ENCODE measurements at regions of chr10 and their contacts with region 1.

Region 1: GRCh38 chr10:68955832-68956532 is at the start of gene DDX21:
- DNase-seq: peak; percentile 73 to 95 (median 82)
- ATAC-seq: peak; percentile 80
- H3K4me3 ChIP-seq: peak within 1 kb of the TSS; percentile 97
- H3K4me3 Mint-ChIP-seq: peak within 1 kb of the TSS; percentile 95
- H3K27ac ChIP-seq: peak within 1 kb of the TSS; percentile 98 to 100
- H3K27ac Mint-ChIP-seq: peak within 1 kb of the TSS; percentile 94
- H3K4me1 ChIP-seq: peaks cover 45% of the 10 kb centered on the region
- H3K4me1 Mint-ChIP-seq: peaks cover 44% of the 10 kb centered on the region
- H3K27me3 ChIP-seq: no peaks in the 10 kb centered on the region
- H3K27me3 Mint-ChIP-seq: no peaks in the 10 kb centered on the region
- CTCF ChIP-seq: peak; percentile 87
- total RNA-seq, gene DDX21: 120 to 121 TPM

Region 2: DNA sequence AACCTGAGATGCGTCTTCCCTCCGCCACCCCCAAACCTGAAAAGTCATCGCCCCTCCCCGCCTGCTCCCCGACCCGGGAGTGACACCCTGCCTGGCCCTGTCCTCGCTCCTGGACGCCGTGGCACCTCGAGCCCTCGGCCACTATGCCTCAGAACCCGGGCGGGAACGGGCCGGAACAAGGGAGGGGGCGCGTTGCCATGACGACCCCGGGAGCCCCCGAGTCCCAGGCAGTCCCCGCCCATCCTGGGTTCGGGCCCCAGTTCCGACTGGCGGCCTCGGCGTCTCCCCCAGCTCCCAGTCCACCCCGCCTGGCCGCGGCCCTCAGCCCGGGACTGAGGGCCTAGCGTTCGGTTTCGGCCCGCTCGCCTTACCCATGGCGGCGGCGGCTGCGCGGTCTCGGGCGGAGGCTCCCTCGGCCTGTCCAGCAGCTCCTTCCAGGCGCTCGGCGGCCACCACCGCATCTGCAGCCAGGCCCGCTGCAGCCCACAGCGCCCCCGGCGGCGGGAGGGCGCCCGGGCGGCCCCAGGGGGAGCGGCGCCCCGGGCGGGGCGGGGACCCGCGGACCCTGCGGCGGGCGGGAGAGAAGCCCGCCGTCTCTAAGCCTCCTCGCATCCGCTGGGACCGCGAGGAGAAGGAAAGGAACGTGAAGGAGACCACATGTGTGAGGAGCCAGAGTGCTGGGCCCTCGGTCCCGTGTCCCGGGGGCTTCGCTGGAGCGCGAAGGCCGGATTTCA is 549.0 kb before region 1 on chr10 and contains the start of gene RUFY2:
- CTCF ChIA-PET with region 1: no interaction called
- POLR2A ChIA-PET with region 1: no interaction called
- intact Hi-C with region 1: loop called in 1 of 2 experiments (anchors 10 kb)
- DNase-seq: peak; percentile 42 to 88 (median 70)
- ATAC-seq: peak; percentile 94
- H3K4me3 ChIP-seq: peak within 1 kb of the TSS; percentile 99
- H3K4me3 Mint-ChIP-seq: peak within 1 kb of the TSS; percentile 89
- H3K27ac ChIP-seq: peak within 1 kb of the TSS in 1 of 2 donors; percentile 35
- H3K27ac Mint-ChIP-seq: peak within 1 kb of the TSS; percentile 53
- H3K4me1 ChIP-seq: peaks cover 11% of the 10 kb centered on the region
- H3K4me1 Mint-ChIP-seq: peaks cover 18% of the 10 kb centered on the region
- H3K27me3 ChIP-seq: no peaks in the 10 kb centered on the region
- H3K27me3 Mint-ChIP-seq: no peaks in the 10 kb centered on the region
- CTCF ChIP-seq: peak; percentile 57
- total RNA-seq, gene RUFY2: 10.7 to 14.8 TPM

Region 3: DNA sequence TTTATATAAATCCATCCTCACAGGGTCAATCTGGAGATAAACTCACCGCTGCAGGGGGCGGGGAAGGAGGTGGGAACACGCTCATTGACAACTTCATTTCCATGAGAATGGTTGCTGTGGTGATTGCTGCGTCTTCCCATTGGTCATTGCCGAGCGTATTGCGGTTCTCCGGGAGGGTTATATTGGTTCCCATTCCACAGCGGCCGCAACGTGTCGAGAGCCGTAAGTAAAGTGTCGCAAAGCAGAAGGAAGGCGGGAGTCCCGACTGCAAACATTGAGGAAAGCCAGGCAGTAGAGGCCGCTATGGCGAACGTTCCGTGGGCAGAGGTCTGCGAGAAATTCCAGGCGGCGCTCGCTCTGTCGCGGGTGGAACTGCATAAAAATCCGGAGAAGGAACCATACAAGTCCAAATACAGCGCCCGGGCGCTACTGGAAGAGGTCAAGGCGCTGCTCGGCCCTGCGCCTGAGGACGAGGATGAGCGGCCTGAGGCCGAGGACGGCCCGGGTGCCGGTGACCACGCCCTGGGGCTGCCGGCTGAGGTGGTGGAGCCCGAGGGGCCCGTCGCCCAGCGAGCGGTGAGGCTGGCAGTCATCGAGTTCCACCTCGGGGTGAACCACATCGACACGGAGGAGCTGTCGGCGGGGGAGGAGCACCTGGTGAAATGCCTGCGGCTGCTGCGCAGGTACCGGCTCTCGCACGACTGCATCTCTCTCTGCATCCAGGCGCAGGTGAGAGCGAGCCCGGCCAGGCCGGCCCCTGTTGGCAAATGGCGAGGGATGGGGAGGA is 32.7 kb after region 1 on chr10 and contains the start of gene KIFBP:
- CTCF ChIA-PET with region 1: interaction called, 5 read pairs
- POLR2A ChIA-PET with region 1: interaction called, 12 read pairs
- intact Hi-C with region 1: loop called (anchors 5 kb)
- DNase-seq: peak; percentile 60 to 95 (median 74)
- ATAC-seq: peak; percentile 81
- H3K4me3 ChIP-seq: peak within 1 kb of the TSS; percentile 90
- H3K4me3 Mint-ChIP-seq: peak within 1 kb of the TSS; percentile 98
- H3K27ac ChIP-seq: peak within 1 kb of the TSS; percentile 55 to 69
- H3K27ac Mint-ChIP-seq: peak within 1 kb of the TSS; percentile 88
- H3K4me1 ChIP-seq: peaks cover 39% of the 10 kb centered on the region
- H3K4me1 Mint-ChIP-seq: peaks cover 58% of the 10 kb centered on the region
- H3K27me3 ChIP-seq: no peaks in the 10 kb centered on the region
- H3K27me3 Mint-ChIP-seq: no peaks in the 10 kb centered on the region
- CTCF ChIP-seq: peak; percentile 43
- total RNA-seq, gene KIFBP: 4.2 TPM

Region 4: GRCh38 chr10:69092959-69093850 is 137.2 kb after region 1 on chr10:
- CTCF ChIA-PET with region 1: no interaction called
- POLR2A ChIA-PET with region 1: interaction called, 20 read pairs
- intact Hi-C with region 1: loop called (anchors 1 to 2 kb)
- DNase-seq: peak; percentile 54 to 96 (median 76)
- ATAC-seq: peak; percentile 33
- H3K4me3 ChIP-seq: no peak overlapping the region
- H3K4me3 Mint-ChIP-seq: peak overlapping the region; percentile 36
- H3K27ac ChIP-seq: peak overlapping the region; percentile 49 to 52
- H3K27ac Mint-ChIP-seq: peak overlapping the region; percentile 94
- H3K4me1 ChIP-seq: peaks cover 60% of the 10 kb centered on the region
- H3K4me1 Mint-ChIP-seq: peaks cover 53% of the 10 kb centered on the region
- H3K27me3 ChIP-seq: no peaks in the 10 kb centered on the region
- H3K27me3 Mint-ChIP-seq: no peaks in the 10 kb centered on the region
- CTCF ChIP-seq: peak; percentile 88

Measured in CD4-positive, alpha-beta T cell (primary cell).